RWPE1 (cell line): ENCODE measurements at regions of chr20 and their contacts with region 1.

Region 1: DNA sequence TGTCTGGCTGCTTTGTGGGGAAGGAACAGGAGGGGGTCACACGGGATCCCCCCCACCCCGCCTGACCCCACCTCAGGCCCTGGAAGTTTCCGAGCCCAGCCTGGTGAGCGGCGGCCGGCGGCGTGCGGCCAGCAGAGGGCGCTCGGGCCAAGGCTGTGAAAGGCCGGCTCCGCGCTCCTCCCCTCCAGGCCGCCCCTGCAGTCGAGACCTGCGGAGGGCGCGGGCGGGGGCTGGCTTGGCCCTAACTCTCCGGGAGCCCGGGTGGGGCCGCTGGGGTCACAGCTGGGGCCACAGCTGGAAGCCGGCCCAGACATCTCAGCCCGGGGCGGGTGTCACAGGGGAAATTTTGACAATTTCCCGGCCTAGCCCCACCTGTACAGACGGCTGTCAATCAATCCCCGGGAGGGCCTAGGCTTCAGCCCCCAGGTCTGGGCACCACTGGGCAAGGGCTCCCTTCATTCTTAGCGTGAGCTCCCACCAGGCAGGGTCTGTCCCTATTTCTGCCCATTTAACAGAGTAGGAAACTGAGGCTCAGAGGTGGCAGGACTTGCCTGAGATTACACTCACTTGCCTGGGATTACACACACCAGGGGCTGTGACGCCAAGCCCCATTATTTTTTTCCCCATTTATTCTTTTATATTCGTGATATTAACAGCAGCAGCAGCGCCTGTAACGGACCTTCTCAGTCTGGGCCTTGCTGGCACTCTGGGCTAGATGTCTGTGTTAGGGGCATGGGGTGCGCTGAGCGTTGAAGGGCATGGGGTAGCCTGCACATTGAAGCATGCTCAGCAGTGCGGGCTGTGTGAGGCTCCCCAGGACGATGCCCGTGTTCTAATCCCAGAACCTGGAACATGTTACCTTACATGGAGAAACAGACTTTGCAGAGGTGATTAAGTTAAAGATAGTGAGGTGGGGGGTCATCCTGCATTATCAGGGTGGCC is 23.0 kb downstream of the ZBP1 start:
- DNase-seq: peak; percentile 89
- H3K27ac ChIP-seq: no peak overlapping the region
- CTCF ChIP-seq: peak; percentile 99

Region 2: DNA sequence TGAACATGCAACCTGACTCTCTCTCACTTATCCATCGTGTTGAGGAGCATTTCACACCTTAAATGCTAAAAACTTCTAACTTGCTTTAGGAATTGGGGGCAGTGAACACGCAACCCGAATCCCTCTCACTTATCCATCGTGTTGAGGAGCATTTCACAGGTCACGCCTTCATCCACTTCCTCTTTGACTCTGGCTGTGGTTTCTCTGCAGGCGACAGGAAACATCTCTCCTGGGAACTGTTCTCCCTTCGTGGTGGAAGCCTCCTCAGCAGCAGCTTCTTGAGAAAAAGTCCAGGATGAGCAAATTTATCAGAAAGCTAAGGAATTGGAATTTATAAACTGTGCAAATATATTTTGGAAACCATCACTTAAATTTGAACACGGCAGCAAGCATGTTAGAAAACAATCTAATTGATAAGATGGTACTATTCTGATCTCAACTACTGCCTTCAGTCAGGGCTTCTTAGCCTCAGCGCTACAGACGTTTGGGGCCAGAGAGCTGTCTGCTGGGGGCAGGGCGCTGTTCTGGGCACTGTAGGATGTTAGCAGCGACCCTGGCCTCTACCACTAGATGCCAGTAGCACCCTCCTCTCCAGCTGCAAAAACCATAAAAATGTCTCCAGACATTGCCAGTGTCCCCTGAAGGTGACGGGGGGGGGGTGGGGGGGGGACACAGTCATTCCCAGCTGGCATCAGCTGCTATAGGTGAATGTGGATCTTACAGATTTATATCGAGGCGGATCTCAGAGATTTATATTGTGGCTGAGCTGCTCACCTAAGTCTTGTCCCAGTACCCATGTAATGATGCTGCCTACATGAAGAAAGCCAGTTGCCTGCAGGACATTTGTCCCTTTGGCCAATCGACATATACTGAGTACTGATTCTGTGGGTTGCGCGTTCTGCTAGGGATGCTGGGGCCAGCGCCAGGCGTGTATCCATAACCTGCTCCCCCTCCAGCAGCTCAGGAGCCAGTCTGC is 98.6 kb before region 1 on chr20:
- CTCF ChIA-PET with region 1: interaction called, 18 read pairs
- POLR2A ChIA-PET with region 1: no interaction called
- DNase-seq: peak; percentile 41
- H3K27ac ChIP-seq: no peak overlapping the region
- CTCF ChIP-seq: peak; percentile 68

Region 3: DNA sequence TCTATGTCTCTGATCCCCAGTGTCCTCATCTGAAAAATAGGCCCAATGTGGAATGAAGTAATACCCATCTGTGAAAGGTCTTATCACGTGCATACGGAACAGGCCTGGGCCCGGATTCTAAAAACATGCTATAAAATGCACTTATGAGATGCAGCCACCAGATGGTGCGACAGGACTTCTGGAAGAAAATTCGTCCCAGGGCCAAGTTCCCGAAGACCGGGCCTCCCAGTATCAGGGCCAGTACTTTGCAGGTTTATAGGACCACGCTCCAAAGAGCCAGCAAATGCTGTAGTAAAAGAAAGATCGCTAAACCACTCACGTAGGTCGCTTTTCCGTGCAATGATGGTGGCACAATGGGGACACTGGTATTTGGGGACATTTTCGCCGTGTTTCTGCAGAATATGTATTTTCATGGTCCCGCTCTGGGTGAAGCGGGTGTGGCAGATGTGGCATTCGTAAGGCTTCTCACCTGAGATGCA is 83.0 kb before region 1 on chr20:
- CTCF ChIA-PET with region 1: interaction called, 25 read pairs
- POLR2A ChIA-PET with region 1: interaction called, 3 read pairs
- DNase-seq: peak; percentile 88
- H3K27ac ChIP-seq: no peak overlapping the region
- CTCF ChIP-seq: peak; percentile 91

Region 4: GRCh38 chr20:57582432-57583305 is 14.6 kb before region 1 on chr20:
- CTCF ChIA-PET with region 1: interaction called, 14 read pairs
- POLR2A ChIA-PET with region 1: no interaction called
- DNase-seq: no peak
- H3K27ac ChIP-seq: no peak overlapping the region
- CTCF ChIP-seq: peak; percentile 59

Region 5: DNA sequence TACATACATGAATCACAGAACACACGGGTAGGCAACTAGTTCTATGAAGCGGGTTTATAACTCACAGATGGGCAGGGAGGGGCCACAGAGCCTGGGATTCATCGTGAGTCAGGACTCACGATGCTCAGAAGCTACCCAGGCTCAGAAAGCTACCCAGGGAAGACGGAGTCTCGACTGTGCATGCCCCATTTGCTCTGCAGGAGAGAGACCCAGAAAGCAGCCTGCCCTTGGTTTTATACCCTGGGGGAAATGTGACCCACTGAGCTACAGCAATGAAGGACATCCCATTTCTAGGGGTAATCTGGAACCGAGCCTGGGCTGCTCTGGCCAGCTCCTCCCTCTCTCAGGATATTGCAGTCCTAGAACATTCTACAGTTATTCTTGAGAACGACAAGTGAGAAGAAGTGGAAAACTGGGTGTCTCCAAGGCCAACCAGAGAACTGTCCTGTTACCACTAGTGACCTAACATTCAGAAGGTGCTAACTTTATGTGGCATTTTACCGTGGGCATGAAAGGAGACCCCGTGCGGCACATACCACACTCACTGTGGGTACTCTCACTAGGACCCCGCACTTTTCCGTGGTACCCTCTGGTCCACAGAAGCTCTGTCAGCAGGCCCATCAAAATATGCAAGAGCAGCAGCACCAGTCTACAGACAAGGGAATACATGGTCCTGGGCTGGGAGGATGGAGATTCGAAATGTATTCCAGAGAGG is 314.4 kb after region 1 on chr20:
- CTCF ChIA-PET with region 1: no interaction called
- POLR2A ChIA-PET with region 1: no interaction called
- DNase-seq: peak; percentile 43
- H3K27ac ChIP-seq: no peak overlapping the region
- CTCF ChIP-seq: no peak

Region 6: DNA sequence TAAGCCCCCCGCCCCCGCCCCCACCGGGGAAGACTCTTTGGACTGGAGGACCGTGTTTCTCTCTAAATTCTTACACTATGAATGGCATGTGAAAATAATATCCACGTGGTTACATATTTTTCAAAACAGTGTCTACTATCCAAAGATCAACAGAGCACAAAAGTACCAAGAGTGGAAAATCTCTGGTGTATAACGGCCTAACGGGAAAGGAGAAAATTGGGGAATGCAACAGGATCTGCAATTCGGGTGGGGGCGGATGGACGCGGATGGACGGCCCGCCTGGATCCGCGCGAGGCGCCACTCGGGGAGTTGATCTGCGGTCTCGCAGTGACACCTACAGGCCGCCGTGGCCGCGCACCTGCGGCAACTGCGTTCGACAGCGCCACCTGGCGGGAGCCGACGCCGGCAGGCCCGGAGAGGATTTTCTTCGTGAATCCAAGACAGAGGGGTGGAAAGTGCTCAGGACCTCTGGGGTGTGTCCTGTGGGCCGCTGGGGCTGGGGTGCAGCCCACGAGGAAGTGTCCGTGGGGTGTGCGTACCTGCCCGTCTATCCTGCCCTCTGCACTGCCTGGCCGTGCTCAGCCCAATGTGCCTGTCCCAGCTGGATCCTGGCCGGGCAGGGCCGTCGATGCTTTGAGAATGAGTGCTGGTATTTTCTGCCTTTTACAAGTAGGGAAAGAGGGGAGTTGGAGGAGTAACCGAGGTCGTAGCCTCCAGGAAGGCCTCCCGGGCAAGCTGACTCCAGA is 612.6 kb after region 1 on chr20:
- CTCF ChIA-PET with region 1: interaction called, 109 read pairs
- POLR2A ChIA-PET with region 1: interaction called, 3 read pairs
- DNase-seq: peak; percentile 96
- H3K27ac ChIP-seq: peak overlapping the region; percentile 12; the same call in 1 of the 2 replicates
- CTCF ChIP-seq: peak; percentile 100